Dorsolateral prefrontal cortex (tissue), 120 donors: ENCODE measurements at regions of chr1 and their contacts with region 1.

Region 1: GRCh38 chr1:58783993-58784757 is at the start of gene JUN:
- DNase-seq: peak; percentile 98 to 99 (median 99)
- H3K4me3 ChIP-seq: peak within 1 kb of the TSS; percentile 67 to 99 (median 91)
- H3K27ac ChIP-seq: peak within 1 kb of the TSS; percentile 95 to 100 (median 99)
- H3K27me3 ChIP-seq: no peaks in the 10 kb centered on the region
- CTCF ChIP-seq: peak in 26 of 56 donors; percentile 6 to 42 (median 21)
- total RNA-seq, gene JUN: 41.3 to 211 (median 70.6) TPM

Region 2: GRCh38 chr1:58739856-58740466 is 44.2 kb before region 1 on chr1:
- intact Hi-C with region 1: loop called in 1 of 2 experiments (anchors 5 kb)
- DNase-seq: no peak
- H3K4me3 ChIP-seq: no peak overlapping the region
- H3K27ac ChIP-seq: no peak overlapping the region
- H3K27me3 ChIP-seq: no peaks in the 10 kb centered on the region
- CTCF ChIP-seq: peak; percentile 75 to 99 (median 90)

Region 3: GRCh38 chr1:58848818-58849411 is 64.7 kb after region 1 on chr1:
- intact Hi-C with region 1: loop called in 1 of 2 experiments (anchors 5 kb)
- DNase-seq: peak in 8 of 10 donors; percentile 31 to 84 (median 58)
- H3K4me3 ChIP-seq: no peak overlapping the region
- H3K27ac ChIP-seq: peak overlapping the region in 45 of 59 donors; percentile 0 to 72 (median 46)
- H3K27me3 ChIP-seq: no peaks in the 10 kb centered on the region
- CTCF ChIP-seq: peak in 1 of 56 donors; percentile 7

Region 4: GRCh38 chr1:58903514-58904298 is 119.5 kb after region 1 on chr1:
- intact Hi-C with region 1: loop called (anchors 1 kb)
- DNase-seq: peak; percentile 66 to 90 (median 84)
- H3K4me3 ChIP-seq: peak overlapping the region; percentile 32 to 88 (median 69)
- H3K27ac ChIP-seq: peak overlapping the region; percentile 81 to 99 (median 96)
- H3K27me3 ChIP-seq: no peaks in the 10 kb centered on the region
- CTCF ChIP-seq: peak in 31 of 56 donors; percentile 3 to 56 (median 26)

Region 5: DNA sequence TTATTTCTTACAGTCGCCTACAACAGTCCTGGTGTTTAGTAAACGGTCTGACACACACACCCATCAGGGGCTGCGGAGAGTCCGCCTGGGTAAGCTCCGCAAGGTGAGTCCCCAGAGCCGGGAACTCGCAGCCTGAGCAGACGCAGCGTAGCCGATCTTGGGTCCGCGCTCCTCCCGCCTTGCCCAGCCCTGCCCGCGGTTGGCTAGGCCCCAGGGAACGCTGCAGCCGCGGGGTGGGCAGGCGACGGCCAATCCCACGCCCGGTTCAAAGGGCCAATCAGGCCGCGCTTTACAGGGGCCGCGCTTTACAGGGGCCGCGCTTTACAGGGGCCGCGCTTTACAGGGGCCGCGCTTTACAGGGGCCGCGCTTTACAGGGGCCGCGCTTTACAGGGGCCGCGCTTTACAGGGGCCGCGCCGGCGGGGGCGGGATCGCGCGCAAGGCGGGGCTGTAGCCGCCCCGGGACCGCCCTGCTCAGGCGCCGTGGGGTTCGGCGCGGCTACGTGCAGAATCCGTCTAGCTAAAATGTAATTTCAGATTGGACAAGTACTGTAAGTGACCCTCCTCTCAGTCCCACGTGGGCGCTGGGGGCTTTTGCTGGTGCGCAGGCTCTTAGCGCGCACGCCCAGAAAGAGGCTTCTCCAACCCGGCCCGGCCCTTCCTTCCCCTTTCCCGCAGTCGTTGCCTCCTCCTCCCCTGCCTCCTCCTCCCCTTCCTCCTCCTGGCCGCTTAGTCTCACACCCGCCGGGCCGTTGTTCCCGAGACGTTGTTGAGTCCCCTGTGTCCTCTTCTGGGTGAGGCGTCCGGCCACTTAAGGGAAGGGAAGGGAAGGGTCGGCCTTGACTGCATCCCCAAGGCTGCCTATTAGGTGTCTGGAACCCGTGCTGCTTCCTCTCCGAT is 512.4 kb after region 1 on chr1 and contains the start of gene FGGY:
- intact Hi-C with region 1: loop called (anchors 1 kb)
- DNase-seq: peak; percentile 82 to 97 (median 94)
- H3K4me3 ChIP-seq: peak within 1 kb of the TSS; percentile 32 to 86 (median 68)
- H3K27ac ChIP-seq: peak within 1 kb of the TSS; percentile 39 to 99 (median 96)
- H3K27me3 ChIP-seq: no peaks in the 10 kb centered on the region
- CTCF ChIP-seq: peak in 14 of 56 donors; percentile 2 to 41 (median 16)
- total RNA-seq, gene FGGY: 23.4 to 68.4 (median 36.5) TPM

Region 6: GRCh38 chr1:59393211-59394180 is 609.3 kb after region 1 on chr1:
- intact Hi-C with region 1: no loop called
- DNase-seq: peak in 4 of 10 donors; percentile 6 to 83 (median 40)
- H3K4me3 ChIP-seq: peak overlapping the region in 9 of 59 donors; percentile 3 to 31 (median 7)
- H3K27ac ChIP-seq: peak overlapping the region; percentile 9 to 91 (median 74)
- H3K27me3 ChIP-seq: no peaks in the 10 kb centered on the region
- CTCF ChIP-seq: peak in 2 of 56 donors; percentile 7 to 15

Region 7: GRCh38 chr1:59707178-59707791 is 923.1 kb after region 1 on chr1:
- intact Hi-C with region 1: loop called in 1 of 2 experiments (anchors 5 kb)
- DNase-seq: peak in 1 of 10 donors; percentile 56
- H3K4me3 ChIP-seq: no peak overlapping the region
- H3K27ac ChIP-seq: peak overlapping the region in 25 of 59 donors; percentile 0 to 73 (median 25)
- H3K27me3 ChIP-seq: no peaks in the 10 kb centered on the region
- CTCF ChIP-seq: no peak